Activated CD4-positive, alpha-beta memory T cell treated with anti-CD3 and anti-CD28 coated beads for 36 hours (primary cell): ENCODE measurements at regions of chr11 and their contacts with region 1.

Region 1: GRCh38 chr11:133403900-133404299 is 128.4 kb downstream of the OPCML start:
- DNase-seq: no peak
- H3K4me3 Mint-ChIP-seq: no peak overlapping the region
- H3K27ac Mint-ChIP-seq: no peak overlapping the region
- H3K4me1 Mint-ChIP-seq: no peaks in the 10 kb centered on the region
- H3K27me3 Mint-ChIP-seq: no peaks in the 10 kb centered on the region

Region 2: DNA sequence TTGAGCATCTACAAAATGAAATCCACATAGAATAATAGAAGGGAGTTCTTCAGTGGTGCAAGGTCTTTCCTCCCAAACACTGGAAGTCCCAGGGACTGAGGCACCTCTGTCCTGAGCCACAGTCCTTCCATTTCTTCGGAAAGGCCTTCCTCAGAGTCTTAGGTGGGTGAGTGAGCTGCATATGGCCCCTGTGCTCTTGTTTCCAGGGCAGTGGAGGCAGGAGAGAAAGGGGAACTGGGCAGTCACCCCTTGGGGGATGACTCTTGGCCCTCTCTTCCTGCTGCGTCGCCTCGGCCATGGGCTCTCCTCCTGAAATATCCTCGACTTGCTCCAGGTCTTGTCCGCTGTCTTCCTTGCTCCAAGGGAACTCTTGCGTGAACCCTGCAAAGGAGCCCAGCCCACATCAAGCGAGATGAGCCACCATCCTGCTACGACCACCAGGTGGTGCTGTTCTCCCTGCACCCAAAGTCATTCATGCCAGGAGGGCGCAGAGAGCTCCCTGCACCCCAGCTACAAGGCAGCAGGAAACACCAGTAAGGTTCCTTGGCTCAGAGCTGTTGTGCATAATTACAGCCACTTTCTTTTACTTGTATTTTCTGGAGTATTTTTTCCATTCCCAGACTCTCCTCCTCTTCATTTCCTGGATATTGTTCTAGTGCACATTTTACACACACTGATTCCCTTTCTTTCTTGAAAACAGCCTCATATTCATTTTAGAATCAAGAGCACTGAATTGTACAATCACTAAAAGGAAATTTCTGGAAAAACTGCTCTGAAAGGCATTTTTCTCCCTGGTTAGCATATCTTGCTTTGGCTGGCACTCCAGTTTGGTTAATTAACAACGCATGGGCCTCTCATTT is 269.4 kb before region 1 on chr11:
- CTCF ChIA-PET with region 1: no interaction called
- POLR2A ChIA-PET with region 1: no interaction called
- intact Hi-C with region 1: loop called (anchors 10 kb)
- DNase-seq: peak; percentile 56
- H3K4me3 Mint-ChIP-seq: no peak overlapping the region
- H3K27ac Mint-ChIP-seq: no peak overlapping the region
- H3K4me1 Mint-ChIP-seq: no peaks in the 10 kb centered on the region
- H3K27me3 Mint-ChIP-seq: peaks cover 7% of the 10 kb centered on the region

Region 3: GRCh38 chr11:133425245-133425644 is 21.3 kb after region 1 on chr11:
- CTCF ChIA-PET with region 1: no interaction called
- POLR2A ChIA-PET with region 1: no interaction called
- intact Hi-C with region 1: no loop called
- DNase-seq: no peak
- H3K4me3 Mint-ChIP-seq: no peak overlapping the region
- H3K27ac Mint-ChIP-seq: no peak overlapping the region
- H3K4me1 Mint-ChIP-seq: no peaks in the 10 kb centered on the region
- H3K27me3 Mint-ChIP-seq: no peaks in the 10 kb centered on the region